ENCODE measurements at regions of chr10 and their contacts with region 1.

Region 1: GRCh38 chr10:13440185-13441061 is 88.4 kb downstream of the BEND7 start:
- DNase-seq: peak in 1 of 2 donors; percentile 18
- ATAC-seq: peak; percentile 60 to 82
- H3K4me3 ChIP-seq: peak overlapping the region; percentile 35 to 53 (median 46)
- H3K27ac ChIP-seq: no peak overlapping the region
- H3K4me1 ChIP-seq: peaks cover 5 to 8% of the 10 kb centered on the region in 2 donors
- H3K27me3 ChIP-seq: peaks cover 0 to 23% (median 9%) of the 10 kb centered on the region in 3 donors
- CTCF ChIP-seq: peak; percentile 51 to 92 (median 76)
- POLR2A ChIP-seq: no peak

Region 2: DNA sequence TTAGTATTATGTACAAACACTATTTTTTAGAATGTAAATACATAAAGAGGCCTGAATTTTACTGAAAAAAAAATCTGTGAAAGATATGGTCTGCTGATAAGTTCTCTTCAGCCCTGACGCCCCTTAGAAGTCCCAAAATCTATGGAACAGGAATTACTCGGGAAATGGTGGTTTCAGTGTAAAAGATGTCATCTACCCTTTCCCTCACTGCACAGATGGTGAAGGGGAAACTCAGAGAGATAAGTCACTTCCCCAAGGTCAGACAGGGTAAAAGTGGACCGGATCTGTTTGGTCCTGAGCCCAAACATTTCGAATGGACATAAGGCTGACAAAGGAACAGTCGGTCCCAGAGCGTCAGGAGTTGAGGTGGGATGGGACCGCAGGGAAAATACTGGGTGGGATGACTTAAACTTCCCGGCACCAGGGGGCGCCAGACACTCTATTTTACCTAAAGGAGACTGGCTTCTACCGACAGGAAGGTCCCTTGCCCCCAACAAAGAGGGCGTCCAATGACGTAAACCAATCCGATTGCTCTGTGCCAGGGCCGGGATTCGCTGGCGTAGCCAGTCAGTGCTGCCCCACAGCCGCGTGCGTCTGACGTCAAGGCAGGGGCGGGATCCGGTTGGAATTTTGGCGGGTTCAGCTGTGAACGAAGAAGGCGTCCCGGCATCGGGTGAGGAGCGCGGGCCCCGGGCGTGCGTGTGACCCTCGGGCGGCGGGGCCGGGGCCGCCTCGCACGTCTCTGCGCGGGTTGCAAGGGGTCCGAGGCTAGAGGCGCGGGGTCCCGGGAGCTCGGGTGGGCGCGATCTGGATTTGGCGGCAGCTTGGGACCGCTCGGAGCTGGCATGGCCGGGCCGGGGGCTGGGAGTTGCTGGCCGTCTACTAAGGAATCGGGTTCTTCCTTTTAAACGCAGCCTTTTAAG is 279.2 kb before region 1 on chr10 and contains the start of gene MCM10:
- in situ Hi-C with region 1: no loop called
- intact Hi-C with region 1: loop called (anchors 2 kb)
- DNase-seq: peak; percentile 97 to 98
- ATAC-seq: peak; percentile 99
- H3K4me3 ChIP-seq: peak within 1 kb of the TSS; percentile 48 to 58 (median 51)
- H3K27ac ChIP-seq: peak within 1 kb of the TSS in 1 of 4 donors; percentile 32
- H3K4me1 ChIP-seq: peaks cover 4 to 9% of the 10 kb centered on the region in 2 donors
- H3K27me3 ChIP-seq: no peaks in the 10 kb centered on the region
- CTCF ChIP-seq: peak; percentile 82 to 94 (median 92)
- POLR2A ChIP-seq: no peak
- total RNA-seq, gene MCM10: 0.64 to 1.5 (median 0.78) TPM